Activated CD8-positive, alpha-beta T cell treated with anti-CD3 and anti-CD28 coated beads for 36 hours (primary cell): ENCODE measurements at regions of chr9 and their contacts with region 1.

Region 1: DNA sequence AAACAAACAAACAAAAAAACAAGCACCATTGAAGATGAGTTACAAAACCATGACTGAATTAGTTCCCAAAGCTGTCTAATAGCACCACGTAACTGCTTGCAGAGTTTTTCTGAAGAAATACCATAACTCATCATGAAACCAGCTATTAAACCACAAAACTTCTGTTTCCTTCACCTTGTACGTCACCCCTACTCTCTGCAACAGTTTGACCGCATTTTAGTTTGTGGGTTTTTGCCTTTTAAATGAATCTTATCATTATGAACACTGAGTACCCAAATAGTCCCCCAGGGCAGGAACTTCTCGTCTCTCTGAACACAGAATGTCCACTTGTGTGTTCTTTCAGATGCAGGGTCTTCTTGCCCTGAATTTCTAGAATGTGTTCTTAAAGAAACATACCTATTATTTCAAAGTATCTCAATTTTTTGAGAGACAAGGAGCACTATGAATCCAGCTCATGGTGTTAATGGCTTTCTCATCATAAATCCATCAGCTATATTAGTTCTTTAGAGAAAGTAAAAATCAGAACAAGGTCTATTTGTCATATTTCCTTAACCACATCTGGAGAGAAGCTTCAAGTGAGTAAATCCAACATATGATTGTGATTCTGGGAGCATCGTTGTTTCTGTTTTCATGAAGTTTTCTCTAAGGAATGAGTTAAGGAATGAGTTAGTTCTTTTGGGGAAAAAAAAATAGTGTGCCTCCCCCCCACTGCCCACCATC is 210.6 kb downstream of the AUH start:
- DNase-seq: peak; percentile 72
- ATAC-seq: peak; percentile 68
- H3K4me3 Mint-ChIP-seq: peak overlapping the region; percentile 0
- H3K27ac Mint-ChIP-seq: peak overlapping the region; percentile 94
- H3K4me1 Mint-ChIP-seq: peaks cover 85% of the 10 kb centered on the region
- H3K27me3 Mint-ChIP-seq: no peaks in the 10 kb centered on the region
- CTCF ChIP-seq: no peak

Region 2: GRCh38 chr9:91047993-91048607 is 103.1 kb before region 1 on chr9:
- CTCF ChIA-PET with region 1: interaction called, 3 read pairs
- POLR2A ChIA-PET with region 1: interaction called, 6 read pairs
- intact Hi-C with region 1: loop called (anchors 5 kb)
- DNase-seq: peak; percentile 70
- ATAC-seq: peak; percentile 86
- H3K4me3 Mint-ChIP-seq: peak overlapping the region; percentile 53
- H3K27ac Mint-ChIP-seq: peak overlapping the region; percentile 93
- H3K4me1 Mint-ChIP-seq: peaks cover 61% of the 10 kb centered on the region
- H3K27me3 Mint-ChIP-seq: peaks cover 30% of the 10 kb centered on the region
- CTCF ChIP-seq: no peak

Region 3: DNA sequence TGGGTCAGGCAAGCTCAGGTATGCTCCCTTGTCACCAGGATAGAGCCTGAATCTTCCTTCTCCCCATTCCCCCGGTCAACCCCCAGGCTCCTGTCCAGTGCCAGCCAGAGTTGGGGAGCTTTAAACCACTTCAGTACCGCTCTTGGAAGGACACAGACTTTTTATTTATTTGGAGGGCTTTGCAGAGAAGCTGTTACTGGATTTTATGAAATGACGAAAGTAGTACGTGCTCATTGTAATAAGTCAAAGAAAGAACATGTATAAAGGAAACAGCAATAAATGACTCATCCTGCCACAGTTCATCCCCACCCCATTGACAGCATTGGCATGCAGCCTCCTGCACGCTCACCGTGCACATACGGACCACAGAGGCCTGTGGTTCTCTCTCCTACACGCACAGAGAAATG is 19.7 kb before region 1 on chr9:
- CTCF ChIA-PET with region 1: interaction called, 7 read pairs
- POLR2A ChIA-PET with region 1: interaction called, 39 read pairs
- intact Hi-C with region 1: loop called (anchors 1 kb)
- DNase-seq: peak; percentile 91
- ATAC-seq: peak; percentile 98
- H3K4me3 Mint-ChIP-seq: peak overlapping the region; percentile 21
- H3K27ac Mint-ChIP-seq: peak overlapping the region; percentile 95
- H3K4me1 Mint-ChIP-seq: peaks cover 26% of the 10 kb centered on the region
- H3K27me3 Mint-ChIP-seq: no peaks in the 10 kb centered on the region
- CTCF ChIP-seq: no peak

Region 4: GRCh38 chr9:91207729-91208418 is 56.7 kb after region 1 on chr9:
- CTCF ChIA-PET with region 1: interaction called, 4 read pairs
- POLR2A ChIA-PET with region 1: interaction called, 19 read pairs
- intact Hi-C with region 1: loop called (anchors 5 kb)
- DNase-seq: peak; percentile 55
- ATAC-seq: peak; percentile 76
- H3K4me3 Mint-ChIP-seq: peak overlapping the region; percentile 35
- H3K27ac Mint-ChIP-seq: peak overlapping the region; percentile 98
- H3K4me1 Mint-ChIP-seq: peaks cover 69% of the 10 kb centered on the region
- H3K27me3 Mint-ChIP-seq: no peaks in the 10 kb centered on the region
- CTCF ChIP-seq: no peak

Region 5: GRCh38 chr9:91285729-91286353 is 134.7 kb after region 1 on chr9:
- CTCF ChIA-PET with region 1: no interaction called
- POLR2A ChIA-PET with region 1: no interaction called
- intact Hi-C with region 1: no loop called
- DNase-seq: no peak
- ATAC-seq: peak; percentile 61
- H3K4me3 Mint-ChIP-seq: no peak overlapping the region
- H3K27ac Mint-ChIP-seq: peak overlapping the region; percentile 36
- H3K4me1 Mint-ChIP-seq: peaks cover 11% of the 10 kb centered on the region
- H3K27me3 Mint-ChIP-seq: no peaks in the 10 kb centered on the region
- CTCF ChIP-seq: no peak

Region 6: DNA sequence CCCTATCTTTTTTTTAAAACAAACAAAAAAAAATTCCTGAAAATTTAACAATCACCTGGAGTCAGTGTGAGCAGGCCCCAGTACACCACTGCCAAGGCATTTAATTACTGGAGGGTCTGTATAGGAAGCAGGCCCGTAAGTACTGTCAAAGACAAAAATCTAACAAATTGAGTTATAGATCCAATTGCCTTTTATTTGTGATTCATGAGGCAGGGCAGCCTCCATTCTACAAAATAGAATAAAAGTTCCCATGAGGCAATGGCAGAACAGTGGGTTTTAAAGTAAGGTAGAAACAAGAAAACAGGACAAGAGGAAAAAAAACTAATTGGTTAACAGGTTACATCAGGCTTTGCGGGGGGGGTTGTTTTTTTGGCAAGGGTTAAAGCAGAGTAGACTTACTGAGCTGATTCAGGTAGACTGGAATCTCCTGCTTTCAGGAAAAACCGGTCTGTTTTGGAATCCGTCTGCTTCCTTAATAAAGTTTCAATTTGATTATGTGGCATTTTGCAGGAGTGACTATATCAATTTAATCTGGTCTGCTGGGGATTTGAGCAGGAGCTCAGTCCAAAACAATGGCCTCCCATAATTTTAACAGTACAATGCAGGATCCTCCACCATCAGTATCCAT is 161.7 kb after region 1 on chr9:
- CTCF ChIA-PET with region 1: no interaction called
- POLR2A ChIA-PET with region 1: no interaction called
- intact Hi-C with region 1: no loop called
- DNase-seq: no peak
- ATAC-seq: no peak
- H3K4me3 Mint-ChIP-seq: no peak overlapping the region
- H3K27ac Mint-ChIP-seq: no peak overlapping the region
- H3K4me1 Mint-ChIP-seq: peaks cover 7% of the 10 kb centered on the region
- H3K27me3 Mint-ChIP-seq: no peaks in the 10 kb centered on the region
- CTCF ChIP-seq: no peak

Region 7: DNA sequence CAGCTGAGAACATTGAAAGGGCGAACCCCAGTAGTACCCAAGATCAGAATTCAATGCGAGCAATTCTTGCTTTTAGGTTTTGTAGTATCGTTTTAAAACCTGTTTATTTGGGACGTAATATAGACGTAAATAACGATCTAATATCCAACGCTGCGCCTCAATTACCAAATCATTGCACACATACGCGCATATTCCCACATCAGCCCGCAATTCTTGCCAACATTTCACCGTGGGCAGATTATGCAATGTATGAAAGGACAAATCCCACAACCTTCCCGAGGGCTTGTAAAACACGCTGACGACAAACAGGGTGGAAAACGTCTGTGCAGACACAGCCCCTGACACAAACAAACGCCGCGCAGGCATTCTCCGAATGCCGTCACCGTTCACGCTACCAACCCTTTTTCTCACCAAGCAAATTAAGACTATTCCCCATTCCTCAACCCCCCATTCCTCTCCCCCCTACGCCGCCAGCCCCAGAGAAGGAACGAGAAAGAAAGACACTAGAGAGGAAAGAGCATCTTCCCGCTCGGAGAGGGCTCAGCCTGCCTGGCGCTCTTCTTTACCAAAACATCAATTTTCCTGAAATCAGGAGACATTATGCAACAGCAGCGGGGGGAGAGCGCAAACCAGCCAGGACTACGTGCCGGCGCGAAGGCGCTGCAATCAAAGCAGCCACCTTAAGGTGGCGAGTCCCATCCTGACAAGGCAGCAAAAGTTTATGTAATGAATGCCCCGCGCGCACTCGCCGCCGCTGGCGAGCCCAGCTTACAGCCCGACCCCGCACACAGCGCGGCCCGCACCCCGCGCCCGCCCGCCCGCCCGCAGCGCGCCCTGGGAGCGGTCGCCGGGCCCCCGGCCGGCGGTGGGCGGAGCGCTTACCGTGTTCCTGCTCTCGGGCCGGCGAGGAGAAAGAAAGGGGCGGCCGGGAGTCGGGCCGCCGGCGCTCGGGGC is 271.9 kb after region 1 on chr9:
- CTCF ChIA-PET with region 1: interaction called, 4 read pairs
- POLR2A ChIA-PET with region 1: interaction called, 17 read pairs
- intact Hi-C with region 1: loop called (anchors 5 kb)
- DNase-seq: peak; percentile 74
- ATAC-seq: peak; percentile 34
- H3K4me3 Mint-ChIP-seq: peak overlapping the region; percentile 99
- H3K27ac Mint-ChIP-seq: peak overlapping the region; percentile 88
- H3K4me1 Mint-ChIP-seq: peaks cover 58% of the 10 kb centered on the region
- H3K27me3 Mint-ChIP-seq: peaks cover 4% of the 10 kb centered on the region
- CTCF ChIP-seq: peak; percentile 30